ENCODE measurements at regions of chr13 and their contacts with region 1.

Region 1: GRCh38 chr13:100235311-100235901 is 146.5 kb downstream of the PCCA start:
- DNase-seq: peak in 7 of 9 donors; percentile 11 to 54 (median 40)
- ATAC-seq: peak; percentile 57
- H3K4me3 ChIP-seq: no peak overlapping the region
- H3K4me3 Mint-ChIP-seq: peak overlapping the region in 1 of 10 donors; percentile 30
- H3K27ac ChIP-seq: no peak overlapping the region
- H3K27ac Mint-ChIP-seq: no peak overlapping the region
- H3K4me1 ChIP-seq: peaks cover 0 to 5% of the 10 kb centered on the region in 2 donors
- H3K4me1 Mint-ChIP-seq: peaks cover 3 to 8% (median 5%) of the 10 kb centered on the region in 7 donors
- H3K27me3 ChIP-seq: no peaks in the 10 kb centered on the region
- H3K27me3 Mint-ChIP-seq: peaks cover 0 to 3% (median 0%) of the 10 kb centered on the region in 5 donors

Region 2: GRCh38 chr13:99176309-99177276 is 1058.8 kb before region 1 on chr13:
- CTCF ChIA-PET with region 1: no interaction called
- POLR2A ChIA-PET with region 1: no interaction called
- intact Hi-C with region 1: loop called in 1 of 2 experiments (anchors 10 kb)
- DNase-seq: peak; percentile 54 to 79 (median 71)
- ATAC-seq: peak; percentile 95
- H3K4me3 ChIP-seq: peak overlapping the region; percentile 1
- H3K4me3 Mint-ChIP-seq: peak overlapping the region; percentile 39 to 81 (median 72)
- H3K27ac ChIP-seq: no peak overlapping the region
- H3K27ac Mint-ChIP-seq: peak overlapping the region in 8 of 9 donors; percentile 34 to 77 (median 54)
- H3K4me1 ChIP-seq: peaks cover 22 to 24% of the 10 kb centered on the region in 2 donors
- H3K4me1 Mint-ChIP-seq: peaks cover 26 to 44% (median 39%) of the 10 kb centered on the region in 7 donors
- H3K27me3 ChIP-seq: no peaks in the 10 kb centered on the region
- H3K27me3 Mint-ChIP-seq: peaks cover 0 to 13% (median 0%) of the 10 kb centered on the region in 5 donors

Region 3: DNA sequence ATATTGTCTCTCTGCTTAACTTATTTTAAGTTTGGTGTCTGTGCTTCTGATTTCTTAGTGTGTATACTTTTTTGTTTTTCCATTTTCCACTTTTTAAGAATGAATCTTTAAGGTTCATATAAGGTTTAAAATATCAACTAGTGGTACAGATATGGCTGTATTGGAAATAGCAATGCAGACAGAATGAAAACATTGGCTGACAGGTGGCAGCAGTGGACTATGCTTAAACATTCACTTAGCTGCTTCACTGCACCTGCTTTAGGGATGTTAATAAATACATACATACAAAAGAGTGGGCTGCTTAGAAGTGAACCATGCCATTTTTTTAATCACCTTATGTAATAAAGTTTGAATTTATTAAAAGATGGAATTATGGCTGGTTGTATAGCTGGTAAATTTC is 706.9 kb before region 1 on chr13:
- CTCF ChIA-PET with region 1: interaction called, 7 read pairs
- POLR2A ChIA-PET with region 1: no interaction called
- intact Hi-C with region 1: loop called in 1 of 2 experiments (anchors 1 kb)
- DNase-seq: peak in 6 of 9 donors; percentile 9 to 57 (median 48)
- ATAC-seq: peak; percentile 68
- H3K4me3 ChIP-seq: no peak overlapping the region
- H3K4me3 Mint-ChIP-seq: peak overlapping the region in 2 of 10 donors; percentile 12 to 25
- H3K27ac ChIP-seq: no peak overlapping the region
- H3K27ac Mint-ChIP-seq: no peak overlapping the region
- H3K4me1 ChIP-seq: peaks cover 8 to 17% of the 10 kb centered on the region in 2 donors
- H3K4me1 Mint-ChIP-seq: peaks cover 33 to 63% (median 47%) of the 10 kb centered on the region in 7 donors
- H3K27me3 ChIP-seq: no peaks in the 10 kb centered on the region
- H3K27me3 Mint-ChIP-seq: no peaks in the 10 kb centered on the region

Region 4: DNA sequence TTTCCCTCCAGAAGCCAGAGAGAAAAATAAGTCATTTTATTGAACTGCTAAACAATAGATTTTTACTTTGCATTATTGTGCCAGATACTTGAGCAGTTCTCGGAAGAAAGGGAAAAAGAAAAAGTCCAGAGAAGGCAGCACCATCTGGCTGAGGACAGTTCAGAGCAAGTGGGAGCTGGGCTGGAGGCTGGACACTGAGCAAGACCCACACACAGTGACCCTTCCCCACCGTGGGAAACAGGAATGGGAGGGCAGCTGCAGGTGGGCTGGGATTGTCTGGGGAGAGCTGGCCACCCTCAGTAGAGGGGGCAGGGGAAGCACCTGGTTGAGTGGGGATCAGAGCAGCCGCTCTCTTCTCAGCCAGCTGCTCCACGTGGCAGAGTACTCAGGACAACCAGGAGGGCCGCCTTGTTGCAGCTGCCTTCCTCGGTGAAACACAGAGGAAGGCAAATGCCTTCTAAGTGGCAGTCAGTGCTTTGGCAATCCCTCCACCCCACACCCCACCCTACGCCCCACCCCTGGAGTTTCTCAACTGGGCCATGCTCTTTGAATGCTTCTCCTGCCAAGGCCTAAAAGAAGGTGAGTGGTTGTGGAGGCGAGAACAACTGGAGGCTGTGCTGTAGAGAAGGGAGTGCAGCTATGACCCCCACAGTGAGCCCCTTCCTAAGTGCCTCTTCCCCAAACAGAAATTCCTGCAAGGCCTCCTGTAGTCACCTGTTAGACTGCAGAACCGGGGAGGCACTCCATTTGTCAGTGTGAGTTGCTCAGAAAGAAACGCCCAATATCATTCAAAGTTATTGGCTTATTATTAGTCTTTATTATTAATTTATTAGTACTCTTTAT is 443.1 kb before region 1 on chr13:
- CTCF ChIA-PET with region 1: no interaction called
- POLR2A ChIA-PET with region 1: no interaction called
- intact Hi-C with region 1: no loop called
- DNase-seq: no peak
- ATAC-seq: no peak
- H3K4me3 ChIP-seq: no peak overlapping the region
- H3K4me3 Mint-ChIP-seq: no peak overlapping the region
- H3K27ac ChIP-seq: no peak overlapping the region
- H3K27ac Mint-ChIP-seq: no peak overlapping the region
- H3K4me1 ChIP-seq: no peaks in the 10 kb centered on the region
- H3K4me1 Mint-ChIP-seq: no peaks in the 10 kb centered on the region
- H3K27me3 ChIP-seq: no peaks in the 10 kb centered on the region
- H3K27me3 Mint-ChIP-seq: no peaks in the 10 kb centered on the region

Region 5: DNA sequence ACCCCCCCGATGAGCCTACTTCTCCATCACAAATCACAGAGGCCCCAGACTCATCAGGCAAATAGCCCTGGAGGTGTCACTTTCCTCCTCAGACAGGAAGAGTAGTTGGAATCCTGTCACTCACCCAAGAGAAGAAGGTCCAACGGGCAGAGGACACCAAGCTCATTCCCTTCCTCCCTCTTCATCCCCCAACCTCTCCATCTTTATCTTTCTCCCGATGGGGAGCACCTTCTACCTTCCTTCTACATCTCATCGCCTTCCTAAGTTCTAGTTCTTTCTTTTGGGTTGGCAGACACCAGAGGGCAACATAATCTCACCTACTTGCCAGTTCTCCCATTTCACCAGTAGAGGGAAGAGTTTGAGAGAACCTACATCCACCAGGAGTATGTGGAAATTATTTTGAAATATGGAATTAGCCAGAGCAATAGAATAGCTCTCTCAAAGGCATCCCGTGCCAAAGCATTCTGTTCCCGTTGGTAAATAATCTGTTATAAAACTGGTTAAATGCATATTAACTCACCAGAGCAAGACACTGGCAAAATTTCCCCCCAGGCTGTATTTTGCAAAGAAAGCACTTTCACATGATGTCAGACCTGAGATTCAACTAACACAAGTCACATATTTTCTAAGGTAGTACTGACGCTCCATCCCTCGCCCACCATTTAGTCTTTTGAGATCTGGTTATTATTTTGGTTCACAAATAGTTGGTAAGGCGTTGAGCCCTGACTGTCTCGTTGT is 318.9 kb before region 1 on chr13:
- CTCF ChIA-PET with region 1: interaction called, 12 read pairs
- POLR2A ChIA-PET with region 1: no interaction called
- intact Hi-C with region 1: loop called (anchors 1 kb)
- DNase-seq: peak in 6 of 9 donors; percentile 18 to 62 (median 50)
- ATAC-seq: peak; percentile 85
- H3K4me3 ChIP-seq: no peak overlapping the region
- H3K4me3 Mint-ChIP-seq: no peak overlapping the region
- H3K27ac ChIP-seq: no peak overlapping the region
- H3K27ac Mint-ChIP-seq: peak overlapping the region in 1 of 9 donors; percentile 3
- H3K4me1 ChIP-seq: peaks cover 0 to 8% of the 10 kb centered on the region in 2 donors
- H3K4me1 Mint-ChIP-seq: peaks cover 5 to 31% (median 7%) of the 10 kb centered on the region in 7 donors
- H3K27me3 ChIP-seq: no peaks in the 10 kb centered on the region
- H3K27me3 Mint-ChIP-seq: peaks cover 3 to 21% (median 5%) of the 10 kb centered on the region in 5 donors

Region 6: DNA sequence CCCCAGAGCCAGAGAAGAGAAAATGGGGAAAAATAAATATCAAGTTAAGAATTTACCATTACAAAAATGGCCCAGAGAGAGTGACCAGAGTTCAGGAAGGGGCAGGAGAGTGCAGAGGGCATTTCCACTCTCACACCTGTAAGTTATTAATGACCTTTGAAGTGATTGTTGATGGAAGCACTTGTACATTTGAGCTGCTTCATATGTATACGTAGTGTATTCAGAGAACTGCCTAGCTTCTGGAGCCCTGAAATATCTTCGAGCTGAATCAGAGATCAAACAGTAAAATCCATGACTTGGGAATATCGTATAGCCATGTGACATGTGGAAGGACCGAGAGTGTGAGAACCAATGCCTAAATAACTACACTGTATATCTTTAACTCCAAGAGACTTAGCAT is 195.7 kb before region 1 on chr13:
- CTCF ChIA-PET with region 1: interaction called, 3 read pairs
- POLR2A ChIA-PET with region 1: no interaction called
- intact Hi-C with region 1: loop called in 1 of 2 experiments (anchors 1 kb)
- DNase-seq: no peak
- ATAC-seq: no peak
- H3K4me3 ChIP-seq: no peak overlapping the region
- H3K4me3 Mint-ChIP-seq: no peak overlapping the region
- H3K27ac ChIP-seq: no peak overlapping the region
- H3K27ac Mint-ChIP-seq: no peak overlapping the region
- H3K4me1 ChIP-seq: no peaks in the 10 kb centered on the region
- H3K4me1 Mint-ChIP-seq: no peaks in the 10 kb centered on the region
- H3K27me3 ChIP-seq: no peaks in the 10 kb centered on the region
- H3K27me3 Mint-ChIP-seq: peaks cover 0 to 7% (median 5%) of the 10 kb centered on the region in 5 donors

Region 7: GRCh38 chr13:100514788-100515409 is 279.5 kb after region 1 on chr13:
- CTCF ChIA-PET with region 1: interaction called, 4 read pairs
- POLR2A ChIA-PET with region 1: no interaction called
- intact Hi-C with region 1: loop called (anchors 1 to 2 kb)
- DNase-seq: peak; percentile 37 to 74 (median 63)
- ATAC-seq: peak; percentile 94
- H3K4me3 ChIP-seq: no peak overlapping the region
- H3K4me3 Mint-ChIP-seq: no peak overlapping the region
- H3K27ac ChIP-seq: no peak overlapping the region
- H3K27ac Mint-ChIP-seq: peak overlapping the region in 1 of 9 donors; percentile 80
- H3K4me1 ChIP-seq: peaks cover 0 to 7% of the 10 kb centered on the region in 2 donors
- H3K4me1 Mint-ChIP-seq: peaks cover 0 to 30% (median 6%) of the 10 kb centered on the region in 7 donors
- H3K27me3 ChIP-seq: no peaks in the 10 kb centered on the region
- H3K27me3 Mint-ChIP-seq: peaks cover 0 to 4% (median 0%) of the 10 kb centered on the region in 5 donors